ENCODE measurements at regions of chrX and their contacts with region 1.

Region 1: DNA sequence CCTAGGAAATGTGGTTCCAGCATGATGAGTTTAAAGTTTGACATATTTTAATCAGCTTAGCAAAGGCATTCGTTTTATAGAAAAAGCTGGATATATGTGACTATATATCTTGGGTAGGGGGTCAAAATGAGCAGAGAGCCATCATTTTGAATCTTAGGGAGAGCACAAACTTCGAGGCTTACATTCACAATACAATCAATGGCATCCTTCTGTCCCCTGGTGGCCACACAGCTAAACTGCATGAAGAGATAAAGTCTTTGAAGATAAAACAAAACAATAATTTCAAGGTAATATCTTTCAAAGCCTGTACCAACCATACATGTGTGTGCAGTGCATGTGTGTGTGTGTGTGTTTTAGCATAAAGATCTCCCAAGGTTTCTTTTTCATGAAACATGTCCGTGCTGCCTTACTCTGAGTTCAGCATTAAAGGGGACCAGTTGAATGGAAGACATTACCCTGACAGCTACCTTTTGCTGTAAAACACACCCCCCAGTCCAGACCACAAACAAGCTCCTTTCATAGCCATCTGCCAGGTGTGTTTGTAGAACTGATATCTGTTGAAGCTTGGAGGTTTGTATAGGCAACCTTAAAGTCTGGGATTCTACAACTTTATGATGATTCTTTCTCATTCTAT is 22.0 kb downstream of the DYNLT3 start:
- DNase-seq: peak; percentile 32 to 41
- H3K4me3 ChIP-seq: no peak overlapping the region
- H3K4me3 Mint-ChIP-seq: no peak overlapping the region
- H3K27ac Mint-ChIP-seq: no peak overlapping the region
- H3K4me1 ChIP-seq: no peaks in the 10 kb centered on the region
- H3K4me1 Mint-ChIP-seq: peaks cover 11% of the 10 kb centered on the region
- H3K27me3 ChIP-seq: no peaks in the 10 kb centered on the region
- H3K27me3 Mint-ChIP-seq: no peaks in the 10 kb centered on the region
- CTCF ChIP-seq: peak; percentile 55 to 75

Region 2: GRCh38 chrX:37509349-37509748 is 316.0 kb before region 1 on chrX:
- CTCF ChIA-PET with region 1: no interaction called
- POLR2A ChIA-PET with region 1: no interaction called
- intact Hi-C with region 1: loop called (anchors 10 kb)
- DNase-seq: peak in 1 of 2 experiments; percentile 5
- H3K4me3 ChIP-seq: no peak overlapping the region
- H3K4me3 Mint-ChIP-seq: no peak overlapping the region
- H3K27ac Mint-ChIP-seq: no peak overlapping the region
- H3K4me1 ChIP-seq: no peaks in the 10 kb centered on the region
- H3K4me1 Mint-ChIP-seq: no peaks in the 10 kb centered on the region
- H3K27me3 ChIP-seq: no peaks in the 10 kb centered on the region
- H3K27me3 Mint-ChIP-seq: peaks cover 5% of the 10 kb centered on the region
- CTCF ChIP-seq: peak in 1 of 2 experiments; percentile 30

Region 3: DNA sequence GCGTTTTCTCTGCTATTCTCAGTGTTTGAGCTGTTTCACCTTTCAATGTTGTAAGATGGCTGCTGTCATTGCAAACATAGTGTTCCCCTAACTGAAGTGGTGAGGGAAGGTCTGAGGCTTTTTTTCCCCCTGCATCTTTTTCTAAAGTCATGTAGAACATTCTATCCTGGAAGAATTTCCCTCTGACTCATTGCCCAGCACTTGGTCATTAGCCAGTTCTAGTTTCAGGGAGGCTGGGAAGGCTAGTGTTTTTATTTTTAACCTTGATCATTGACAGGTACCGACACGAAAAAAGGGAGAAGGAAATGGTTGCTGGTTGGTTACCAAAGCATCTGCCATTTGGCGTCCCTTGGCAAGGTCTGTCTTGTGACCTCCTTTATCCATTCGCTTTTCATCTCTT is 247.3 kb before region 1 on chrX:
- CTCF ChIA-PET with region 1: no interaction called
- POLR2A ChIA-PET with region 1: no interaction called
- intact Hi-C with region 1: loop called (anchors 2 kb)
- DNase-seq: no peak
- H3K4me3 ChIP-seq: no peak overlapping the region
- H3K4me3 Mint-ChIP-seq: no peak overlapping the region
- H3K27ac Mint-ChIP-seq: no peak overlapping the region
- H3K4me1 ChIP-seq: no peaks in the 10 kb centered on the region
- H3K4me1 Mint-ChIP-seq: no peaks in the 10 kb centered on the region
- H3K27me3 ChIP-seq: no peaks in the 10 kb centered on the region
- H3K27me3 Mint-ChIP-seq: no peaks in the 10 kb centered on the region
- CTCF ChIP-seq: no peak

Region 4: DNA sequence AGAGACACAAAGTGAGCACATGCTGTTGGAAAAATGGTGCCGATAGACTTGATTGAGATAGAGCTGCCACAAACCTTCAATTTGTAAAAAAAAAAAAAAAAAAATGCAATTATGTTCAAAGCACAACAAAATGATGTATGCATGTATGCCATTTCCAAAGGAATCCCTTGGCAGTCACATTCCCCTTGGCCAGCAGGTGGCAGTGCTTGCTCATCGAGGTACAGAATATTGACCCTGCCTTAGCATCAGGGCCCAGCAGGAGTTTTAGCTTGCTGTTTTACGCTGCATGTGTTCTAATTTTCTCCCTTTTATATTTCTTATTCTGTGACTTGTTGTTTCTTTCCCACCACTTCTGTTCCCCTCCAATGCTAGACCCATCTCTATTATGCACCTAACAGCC is 80.0 kb before region 1 on chrX:
- CTCF ChIA-PET with region 1: interaction called, 8 read pairs
- POLR2A ChIA-PET with region 1: no interaction called
- intact Hi-C with region 1: loop called (anchors 1 kb)
- DNase-seq: peak; percentile 61 to 69
- H3K4me3 ChIP-seq: no peak overlapping the region
- H3K4me3 Mint-ChIP-seq: no peak overlapping the region
- H3K27ac Mint-ChIP-seq: no peak overlapping the region
- H3K4me1 ChIP-seq: no peaks in the 10 kb centered on the region
- H3K4me1 Mint-ChIP-seq: no peaks in the 10 kb centered on the region
- H3K27me3 ChIP-seq: no peaks in the 10 kb centered on the region
- H3K27me3 Mint-ChIP-seq: peaks cover 5% of the 10 kb centered on the region
- CTCF ChIP-seq: peak; percentile 63 to 72

Region 5: GRCh38 chrX:37759878-37760418 is 65.4 kb before region 1 on chrX:
- CTCF ChIA-PET with region 1: no interaction called
- POLR2A ChIA-PET with region 1: no interaction called
- intact Hi-C with region 1: no loop called
- DNase-seq: no peak
- H3K4me3 ChIP-seq: no peak overlapping the region
- H3K4me3 Mint-ChIP-seq: no peak overlapping the region
- H3K27ac Mint-ChIP-seq: no peak overlapping the region
- H3K4me1 ChIP-seq: no peaks in the 10 kb centered on the region
- H3K4me1 Mint-ChIP-seq: no peaks in the 10 kb centered on the region
- H3K27me3 ChIP-seq: no peaks in the 10 kb centered on the region
- H3K27me3 Mint-ChIP-seq: no peaks in the 10 kb centered on the region
- CTCF ChIP-seq: no peak

Region 6: DNA sequence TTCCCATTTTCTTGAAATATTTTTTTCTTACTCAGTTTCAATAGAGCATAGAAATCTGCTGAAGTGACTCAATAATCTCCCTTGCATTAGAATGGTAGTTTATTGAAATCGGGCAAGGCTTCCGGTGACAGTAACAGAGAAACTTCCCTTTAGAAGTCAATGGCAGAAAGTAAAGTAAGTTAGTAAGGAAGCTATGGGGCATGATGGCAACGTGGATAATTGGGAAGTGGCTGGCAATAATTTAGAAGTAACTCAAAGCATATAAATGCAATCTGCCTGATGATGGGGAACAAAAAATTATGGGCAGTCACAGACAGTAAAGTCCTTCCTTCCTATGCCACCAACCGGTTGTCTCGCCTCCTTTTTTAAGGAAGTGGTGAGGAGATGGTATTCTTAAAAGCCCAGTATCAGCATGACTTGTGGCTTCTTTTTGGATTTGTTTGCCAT is 37.9 kb before region 1 on chrX:
- CTCF ChIA-PET with region 1: interaction called, 3 read pairs
- POLR2A ChIA-PET with region 1: no interaction called
- intact Hi-C with region 1: loop called (anchors 5 kb)
- DNase-seq: no peak
- H3K4me3 ChIP-seq: no peak overlapping the region
- H3K4me3 Mint-ChIP-seq: no peak overlapping the region
- H3K27ac Mint-ChIP-seq: no peak overlapping the region
- H3K4me1 ChIP-seq: no peaks in the 10 kb centered on the region
- H3K4me1 Mint-ChIP-seq: no peaks in the 10 kb centered on the region
- H3K27me3 ChIP-seq: no peaks in the 10 kb centered on the region
- H3K27me3 Mint-ChIP-seq: no peaks in the 10 kb centered on the region
- CTCF ChIP-seq: no peak

Region 7: DNA sequence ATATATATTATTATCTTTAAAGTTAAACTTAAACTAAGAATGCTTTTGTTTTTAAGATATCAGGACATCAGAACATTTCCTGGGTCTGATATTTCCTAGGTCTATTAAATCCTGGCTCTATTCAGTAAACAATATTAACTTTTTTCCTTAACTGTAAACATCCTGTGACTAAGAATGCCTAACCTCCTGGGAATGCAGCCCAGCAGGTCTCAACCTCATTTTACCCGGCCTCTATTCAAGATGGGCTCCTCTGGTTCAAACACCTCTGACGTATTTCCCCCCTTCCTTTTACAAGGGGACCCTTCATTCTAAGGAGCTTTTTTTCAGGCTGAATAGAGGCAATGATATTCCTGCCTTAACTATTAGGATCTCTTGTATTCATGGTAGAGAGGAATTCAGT is 57.9 kb after region 1 on chrX:
- CTCF ChIA-PET with region 1: no interaction called
- POLR2A ChIA-PET with region 1: no interaction called
- intact Hi-C with region 1: no loop called
- DNase-seq: peak; percentile 20 to 56
- H3K4me3 ChIP-seq: no peak overlapping the region
- H3K4me3 Mint-ChIP-seq: no peak overlapping the region
- H3K27ac Mint-ChIP-seq: peak overlapping the region; percentile 2
- H3K4me1 ChIP-seq: peaks cover 10% of the 10 kb centered on the region
- H3K4me1 Mint-ChIP-seq: peaks cover 11% of the 10 kb centered on the region
- H3K27me3 ChIP-seq: no peaks in the 10 kb centered on the region
- H3K27me3 Mint-ChIP-seq: no peaks in the 10 kb centered on the region
- CTCF ChIP-seq: no peak

Region 8: GRCh38 chrX:38175140-38175539 is 349.8 kb after region 1 on chrX:
- CTCF ChIA-PET with region 1: no interaction called
- POLR2A ChIA-PET with region 1: no interaction called
- intact Hi-C with region 1: loop called (anchors 5 kb)
- DNase-seq: peak; percentile 51 to 57
- H3K4me3 ChIP-seq: no peak overlapping the region
- H3K4me3 Mint-ChIP-seq: no peak overlapping the region
- H3K27ac Mint-ChIP-seq: no peak overlapping the region
- H3K4me1 ChIP-seq: no peaks in the 10 kb centered on the region
- H3K4me1 Mint-ChIP-seq: no peaks in the 10 kb centered on the region
- H3K27me3 ChIP-seq: no peaks in the 10 kb centered on the region
- H3K27me3 Mint-ChIP-seq: peaks cover under 1% of the 10 kb centered on the region
- CTCF ChIP-seq: peak; percentile 53 to 55

Region 9: DNA sequence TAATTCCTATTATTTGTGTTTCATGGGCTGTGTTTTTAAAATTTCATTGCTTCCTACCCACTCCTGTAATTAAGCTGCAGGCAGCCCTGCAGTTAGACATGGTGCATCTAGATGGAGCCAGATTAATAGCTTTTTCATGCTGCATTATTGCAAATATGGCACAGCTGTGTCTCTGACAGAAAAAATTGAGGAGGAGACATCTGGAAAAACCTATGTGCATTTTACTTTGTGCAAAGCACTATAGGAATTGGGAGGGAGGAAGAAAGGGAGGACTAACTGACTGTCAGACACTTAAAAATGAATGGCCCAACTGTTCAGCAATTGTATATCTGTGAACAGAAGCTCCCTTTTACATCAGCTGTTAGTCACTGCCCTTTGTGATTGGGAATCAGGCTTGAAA is 510.1 kb after region 1 on chrX:
- CTCF ChIA-PET with region 1: no interaction called
- POLR2A ChIA-PET with region 1: no interaction called
- intact Hi-C with region 1: no loop called
- DNase-seq: no peak
- H3K4me3 ChIP-seq: no peak overlapping the region
- H3K4me3 Mint-ChIP-seq: no peak overlapping the region
- H3K27ac Mint-ChIP-seq: no peak overlapping the region
- H3K4me1 ChIP-seq: no peaks in the 10 kb centered on the region
- H3K4me1 Mint-ChIP-seq: no peaks in the 10 kb centered on the region
- H3K27me3 ChIP-seq: no peaks in the 10 kb centered on the region
- H3K27me3 Mint-ChIP-seq: no peaks in the 10 kb centered on the region
- CTCF ChIP-seq: peak; percentile 13 to 35

Measured in Caco-2 (cell line).